CD8-positive, alpha-beta memory T cell (primary cell): ENCODE measurements at regions of chr17 and their contacts with region 1.

Region 1: DNA sequence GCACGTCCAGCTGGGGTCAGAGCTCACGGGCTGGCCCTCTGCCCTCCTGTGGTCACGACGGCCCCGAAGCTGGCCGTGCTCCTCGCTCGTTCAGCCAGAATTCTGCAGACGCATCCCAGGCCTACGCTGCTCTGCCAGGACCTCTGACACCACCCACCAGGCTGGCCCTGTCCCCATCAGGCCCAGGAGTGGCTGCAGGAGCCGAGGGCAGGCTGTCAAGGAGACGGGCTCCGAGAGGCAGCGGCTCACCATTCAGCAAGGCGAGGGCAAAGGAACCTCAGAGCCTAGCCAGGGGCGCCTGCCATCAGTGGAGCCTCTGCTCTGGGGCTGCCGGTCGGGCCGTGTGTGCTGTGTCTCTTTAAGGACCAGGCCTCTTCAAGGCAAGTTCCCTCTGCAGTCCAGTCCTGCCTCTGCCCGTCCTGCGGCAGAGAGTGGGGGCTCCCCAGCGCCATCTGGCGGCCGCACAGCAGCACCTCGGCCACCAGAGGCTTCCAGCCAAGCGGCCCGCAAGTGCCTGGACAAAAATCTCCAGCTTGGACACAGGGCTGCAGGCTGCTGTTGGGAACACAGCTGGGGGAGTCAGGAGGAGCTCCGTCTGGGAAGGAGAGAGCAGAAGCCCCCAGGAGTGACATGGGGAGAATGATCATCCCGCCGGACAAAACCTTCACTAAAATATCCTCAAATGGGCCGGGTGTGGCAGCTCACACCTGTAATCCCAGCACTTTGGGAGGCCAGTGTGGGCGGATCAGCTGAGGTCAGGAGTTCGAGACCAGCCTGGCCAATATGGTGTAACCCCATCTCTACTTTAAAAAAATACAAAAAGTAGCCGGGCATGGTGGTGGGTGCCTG is 7.4 kb upstream of the ABR start:
- DNase-seq: peak; percentile 64 to 80 (median 68)
- H3K4me3 ChIP-seq: no peak overlapping the region
- H3K4me3 Mint-ChIP-seq: no peak overlapping the region
- H3K27ac ChIP-seq: no peak overlapping the region
- H3K27ac Mint-ChIP-seq: no peak overlapping the region
- H3K4me1 ChIP-seq: peaks cover 4% of the 10 kb centered on the region
- H3K4me1 Mint-ChIP-seq: peaks cover 8 to 23% (median 8%) of the 10 kb centered on the region in 3 donors
- H3K27me3 ChIP-seq: no peaks in the 10 kb centered on the region
- H3K27me3 Mint-ChIP-seq: peaks cover 0 to 4% of the 10 kb centered on the region in 2 donors

Region 2: DNA sequence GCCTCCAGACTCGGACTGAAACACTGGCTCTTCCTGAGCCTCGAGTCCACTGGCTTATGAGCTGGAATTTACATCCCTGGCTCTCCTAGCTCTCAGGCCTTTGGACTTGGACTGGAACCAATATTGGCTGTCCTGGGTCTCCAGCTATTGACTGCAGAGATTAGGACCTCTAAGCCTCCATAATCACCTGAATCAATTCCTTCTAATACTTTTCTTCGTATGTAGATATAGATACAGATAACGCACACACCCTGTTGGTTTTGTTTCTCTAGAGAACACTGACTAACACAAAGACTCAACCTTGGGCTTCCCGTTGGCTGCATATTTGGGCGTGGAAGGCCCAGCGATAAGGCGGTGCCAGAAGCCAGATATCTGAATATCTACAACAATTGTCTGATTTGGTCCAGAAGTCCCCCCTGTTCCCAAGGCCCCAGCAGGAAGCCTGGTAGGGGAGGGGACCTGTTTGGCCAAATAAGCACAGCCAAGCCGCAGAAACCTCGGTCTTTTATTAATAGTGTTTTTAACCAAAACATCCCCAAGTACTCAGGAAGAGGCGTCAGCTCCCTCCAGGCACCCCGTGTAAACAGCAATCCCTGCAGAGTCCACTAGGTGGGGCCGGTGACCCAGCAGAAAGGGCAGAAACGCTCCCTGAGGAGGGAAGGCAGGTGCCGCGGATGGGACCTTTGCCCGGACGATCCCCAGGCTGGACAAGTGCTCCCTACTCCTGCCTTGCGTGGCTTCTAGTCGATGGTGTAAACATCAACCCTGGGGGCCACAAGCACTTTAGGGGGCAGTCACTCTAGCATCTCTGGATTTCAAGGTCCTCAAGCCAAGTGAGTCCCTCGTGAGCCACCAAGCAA is 64.4 kb before region 1 on chr17:
- CTCF ChIA-PET with region 1: interaction called, 62 read pairs
- POLR2A ChIA-PET with region 1: no interaction called
- DNase-seq: peak; percentile 63 to 86 (median 69)
- H3K4me3 ChIP-seq: no peak overlapping the region
- H3K4me3 Mint-ChIP-seq: peak overlapping the region in 2 of 7 donors; percentile 27 to 51
- H3K27ac ChIP-seq: no peak overlapping the region
- H3K27ac Mint-ChIP-seq: peak overlapping the region in 3 of 8 donors; percentile 27 to 44 (median 38)
- H3K4me1 ChIP-seq: peaks cover 12% of the 10 kb centered on the region
- H3K4me1 Mint-ChIP-seq: peaks cover 9 to 34% (median 17%) of the 10 kb centered on the region in 3 donors
- H3K27me3 ChIP-seq: no peaks in the 10 kb centered on the region
- H3K27me3 Mint-ChIP-seq: peaks cover 0 to 1% of the 10 kb centered on the region in 2 donors

Region 3: GRCh38 chr17:1197781-1198490 is 10.8 kb after region 1 on chr17:
- CTCF ChIA-PET with region 1: interaction called, 56 read pairs
- POLR2A ChIA-PET with region 1: interaction called, 3 read pairs
- DNase-seq: peak; percentile 44 to 84 (median 76)
- H3K4me3 ChIP-seq: no peak overlapping the region
- H3K4me3 Mint-ChIP-seq: peak overlapping the region; percentile 26 to 82 (median 67)
- H3K27ac ChIP-seq: peak overlapping the region; percentile 32
- H3K27ac Mint-ChIP-seq: peak overlapping the region; percentile 78 to 99 (median 86)
- H3K4me1 ChIP-seq: peaks cover 60% of the 10 kb centered on the region
- H3K4me1 Mint-ChIP-seq: peaks cover 57 to 68% (median 65%) of the 10 kb centered on the region in 3 donors
- H3K27me3 ChIP-seq: no peaks in the 10 kb centered on the region
- H3K27me3 Mint-ChIP-seq: no peaks in the 10 kb centered on the region

Region 4: DNA sequence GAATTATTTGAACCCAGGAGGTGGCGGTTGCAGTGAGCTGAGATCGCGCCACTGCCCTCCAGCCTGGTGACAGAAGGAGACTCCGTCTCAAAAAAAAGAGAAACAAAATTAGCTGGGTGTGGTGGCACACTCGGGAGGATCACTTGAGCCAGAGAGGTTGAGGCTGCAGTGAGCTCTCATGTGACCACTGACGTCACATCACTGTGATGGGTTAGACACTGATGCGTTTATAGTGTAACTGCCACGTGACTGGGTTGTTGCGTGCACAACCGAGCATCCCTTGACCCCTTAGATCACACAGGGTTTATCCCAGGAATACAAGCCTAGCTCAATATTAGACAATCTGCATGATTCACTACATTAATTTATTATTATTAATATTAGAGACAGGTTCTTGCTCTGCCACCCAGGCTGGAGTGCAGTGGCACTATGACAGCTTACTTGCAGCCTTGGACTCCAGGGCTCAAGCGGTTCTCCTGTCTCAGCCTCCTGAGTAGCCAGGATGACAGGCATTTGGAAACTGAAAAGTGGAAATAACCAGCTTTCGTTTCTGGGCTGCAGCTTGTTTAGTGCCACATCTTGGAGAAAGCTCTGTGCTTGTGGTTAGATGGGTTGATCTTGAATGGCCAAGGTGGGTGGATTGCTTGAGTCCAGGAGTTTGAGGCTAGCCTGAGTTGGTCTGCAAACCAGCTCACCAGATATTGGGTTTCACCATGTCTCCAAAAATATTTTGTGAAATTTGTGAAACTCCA is 19.1 kb after region 1 on chr17:
- CTCF ChIA-PET with region 1: interaction called, 56 read pairs
- POLR2A ChIA-PET with region 1: interaction called, 3 read pairs
- DNase-seq: no peak
- H3K4me3 ChIP-seq: no peak overlapping the region
- H3K4me3 Mint-ChIP-seq: no peak overlapping the region
- H3K27ac ChIP-seq: no peak overlapping the region
- H3K27ac Mint-ChIP-seq: no peak overlapping the region
- H3K4me1 ChIP-seq: peaks cover 18% of the 10 kb centered on the region
- H3K4me1 Mint-ChIP-seq: peaks cover 14 to 22% (median 15%) of the 10 kb centered on the region in 3 donors
- H3K27me3 ChIP-seq: no peaks in the 10 kb centered on the region
- H3K27me3 Mint-ChIP-seq: no peaks in the 10 kb centered on the region